ENCODE measurements at regions of chr10 and their contacts with region 1.

Region 1: DNA sequence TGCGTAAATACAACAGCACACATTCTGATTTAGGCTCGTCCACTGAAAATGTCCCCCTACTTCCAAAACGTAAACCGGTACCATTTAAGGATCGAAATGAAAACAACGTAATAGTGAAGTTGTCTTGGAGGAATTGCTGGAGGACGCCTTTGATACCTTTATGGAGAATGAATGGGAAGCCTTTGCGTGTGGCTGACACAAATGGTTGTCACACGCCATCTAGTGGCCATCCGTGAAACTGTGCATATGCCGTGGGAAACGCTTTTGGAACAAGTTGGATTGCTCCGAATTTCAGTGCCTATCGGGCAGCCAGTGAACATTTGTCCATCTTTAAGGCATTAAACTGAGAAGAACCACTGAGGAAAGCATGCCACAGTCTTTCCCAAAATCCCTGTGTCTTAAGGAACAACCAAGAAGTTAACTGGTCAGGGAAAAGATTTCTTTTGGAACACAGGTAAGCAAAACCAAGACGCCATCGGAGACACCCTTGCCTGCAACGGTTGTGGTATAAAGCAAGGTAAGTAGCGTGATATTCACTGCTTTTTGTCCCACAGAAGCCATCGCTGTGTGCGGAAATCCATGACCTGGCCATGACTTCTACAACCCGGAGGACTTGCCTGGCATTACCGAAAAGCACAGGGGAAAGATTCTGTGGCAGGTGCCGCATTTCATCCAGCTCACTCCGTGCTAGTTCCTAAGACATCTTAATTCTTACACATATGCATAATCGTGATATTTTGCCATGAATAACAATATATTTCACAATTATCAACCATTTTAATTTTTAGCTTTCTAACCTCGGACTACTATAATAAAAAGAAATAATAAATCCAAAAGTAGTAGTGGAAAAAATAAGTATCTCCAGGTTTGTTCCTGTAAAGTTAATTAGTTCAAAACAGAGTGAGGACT is 100.6 kb downstream of the FAM204A start:
- DNase-seq: peak; percentile 78 to 96 (median 92)
- H3K4me3 ChIP-seq: peak overlapping the region; percentile 30 to 45 (median 38)
- H3K27ac ChIP-seq: no peak overlapping the region
- H3K4me1 ChIP-seq: peaks cover 0 to 4% (median 0%) of the 10 kb centered on the region in 3 donors
- H3K27me3 ChIP-seq: no peaks in the 10 kb centered on the region
- CTCF ChIP-seq: peak; percentile 99

Region 2: GRCh38 chr10:117496616-117497028 is 744.9 kb before region 1 on chr10:
- intact Hi-C with region 1: loop called (anchors 10 kb)
- DNase-seq: peak; percentile 87 to 93 (median 89)
- H3K4me3 ChIP-seq: no peak overlapping the region
- H3K27ac ChIP-seq: no peak overlapping the region
- H3K4me1 ChIP-seq: peaks cover 0 to 3% (median 0%) of the 10 kb centered on the region in 3 donors
- H3K27me3 ChIP-seq: no peaks in the 10 kb centered on the region
- CTCF ChIP-seq: peak; percentile 97

Region 3: DNA sequence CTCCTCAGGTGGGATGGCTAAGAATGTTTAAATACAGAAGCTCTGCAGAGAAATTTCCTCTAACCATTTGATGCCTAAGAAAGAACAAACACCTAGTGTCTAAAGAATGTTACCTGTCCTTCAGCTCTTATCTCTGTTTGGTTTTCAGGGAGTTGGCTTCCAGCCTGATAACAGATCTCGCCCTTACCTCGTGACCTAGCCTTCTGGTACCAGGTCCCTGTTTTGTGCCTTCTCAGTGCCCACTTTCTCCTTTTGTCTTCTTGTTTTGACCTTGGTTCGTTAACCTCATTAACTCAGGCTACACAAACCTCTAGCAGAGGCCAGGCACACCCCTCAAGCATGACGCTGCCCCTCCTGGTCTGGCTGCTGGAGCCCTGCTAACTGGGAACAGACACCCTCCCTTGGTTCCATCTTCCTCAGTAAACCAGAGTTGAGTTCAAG is 178.7 kb before region 1 on chr10:
- intact Hi-C with region 1: no loop called
- DNase-seq: no peak
- H3K4me3 ChIP-seq: no peak overlapping the region
- H3K27ac ChIP-seq: no peak overlapping the region
- H3K4me1 ChIP-seq: no peaks in the 10 kb centered on the region
- H3K27me3 ChIP-seq: no peaks in the 10 kb centered on the region
- CTCF ChIP-seq: no peak

Region 4: DNA sequence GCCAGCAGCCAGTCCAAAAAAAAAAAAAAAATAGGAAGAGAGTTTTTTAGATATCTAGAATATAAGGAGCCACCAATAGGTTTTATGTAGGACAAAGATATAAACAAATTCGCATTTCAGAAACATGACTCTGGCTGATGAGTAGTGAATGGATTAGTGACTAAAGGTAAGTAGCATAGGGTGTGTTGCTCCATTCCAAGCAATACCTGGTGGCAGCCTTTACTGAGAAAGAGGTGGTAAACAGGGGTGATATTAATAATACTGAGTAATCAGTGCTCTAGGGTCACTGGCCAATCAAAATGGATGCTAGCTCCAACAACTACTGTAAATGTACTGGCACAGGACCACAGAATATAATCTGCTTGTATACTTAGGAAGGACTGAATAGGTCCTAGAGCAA is 149.3 kb before region 1 on chr10:
- intact Hi-C with region 1: no loop called
- DNase-seq: no peak
- H3K4me3 ChIP-seq: no peak overlapping the region
- H3K27ac ChIP-seq: no peak overlapping the region
- H3K4me1 ChIP-seq: no peaks in the 10 kb centered on the region
- H3K27me3 ChIP-seq: no peaks in the 10 kb centered on the region
- CTCF ChIP-seq: no peak

Region 5: DNA sequence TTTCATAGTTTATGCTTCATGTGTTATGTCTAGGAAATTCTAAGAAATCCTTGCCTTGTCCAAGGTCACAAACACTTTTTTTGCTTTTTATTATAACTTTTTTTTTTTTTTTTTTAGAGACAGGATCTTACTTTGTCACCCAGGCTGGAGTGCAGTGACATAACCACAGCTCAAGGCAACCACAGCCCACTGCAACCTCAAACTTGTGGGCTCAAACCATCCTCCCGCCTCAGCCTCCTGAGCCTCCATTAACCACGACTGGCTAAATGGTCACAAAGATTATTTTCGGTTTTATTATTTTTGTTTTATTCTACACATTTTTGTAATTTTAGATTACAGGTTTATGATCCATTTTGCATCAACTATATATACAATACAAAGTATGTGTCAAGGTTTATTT is 107.8 kb after region 1 on chr10:
- intact Hi-C with region 1: no loop called
- DNase-seq: no peak
- H3K4me3 ChIP-seq: no peak overlapping the region
- H3K27ac ChIP-seq: no peak overlapping the region
- H3K4me1 ChIP-seq: no peaks in the 10 kb centered on the region
- H3K27me3 ChIP-seq: no peaks in the 10 kb centered on the region
- CTCF ChIP-seq: no peak